Naive thymus-derived CD4-positive, alpha-beta T cell (primary cell): ENCODE measurements at regions of chr9 and their contacts with region 1.

Region 1: DNA sequence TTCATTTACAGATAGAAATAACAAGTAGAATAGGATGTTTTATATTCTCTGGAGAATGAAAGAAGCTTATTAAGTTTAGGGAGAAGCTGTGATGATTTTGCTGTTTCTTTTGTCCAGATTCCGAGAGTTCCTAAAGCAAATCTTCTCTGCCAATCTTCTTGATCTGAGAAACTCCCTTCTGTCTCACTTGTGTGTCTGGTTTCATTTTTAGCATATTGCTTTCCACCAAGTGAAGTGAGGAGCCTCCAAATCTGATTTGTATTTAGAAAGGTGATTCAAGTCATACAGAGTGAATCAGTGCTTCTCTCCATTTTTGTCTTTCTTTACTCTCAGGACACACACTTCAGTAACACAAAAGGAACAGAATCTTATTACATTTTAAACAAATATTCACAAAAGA is 48.4 kb downstream of the STX17 start:
- DNase-seq: no peak
- ATAC-seq: no peak
- H3K4me3 ChIP-seq: no peak overlapping the region
- H3K4me3 Mint-ChIP-seq: peak overlapping the region in 1 of 10 donors; percentile 6
- H3K27ac ChIP-seq: no peak overlapping the region
- H3K27ac Mint-ChIP-seq: peak overlapping the region in 4 of 9 donors; percentile 11 to 64 (median 46)
- H3K4me1 ChIP-seq: no peaks in the 10 kb centered on the region
- H3K4me1 Mint-ChIP-seq: peaks cover 5 to 32% (median 27%) of the 10 kb centered on the region in 7 donors
- H3K27me3 ChIP-seq: no peaks in the 10 kb centered on the region
- H3K27me3 Mint-ChIP-seq: no peaks in the 10 kb centered on the region

Region 2: GRCh38 chr9:99782962-99783718 is 171.7 kb before region 1 on chr9:
- CTCF ChIA-PET with region 1: no interaction called
- POLR2A ChIA-PET with region 1: no interaction called
- intact Hi-C with region 1: no loop called
- DNase-seq: no peak
- ATAC-seq: peak; percentile 48
- H3K4me3 ChIP-seq: no peak overlapping the region
- H3K4me3 Mint-ChIP-seq: no peak overlapping the region
- H3K27ac ChIP-seq: no peak overlapping the region
- H3K27ac Mint-ChIP-seq: no peak overlapping the region
- H3K4me1 ChIP-seq: no peaks in the 10 kb centered on the region
- H3K4me1 Mint-ChIP-seq: no peaks in the 10 kb centered on the region
- H3K27me3 ChIP-seq: no peaks in the 10 kb centered on the region
- H3K27me3 Mint-ChIP-seq: peaks cover 17 to 43% (median 25%) of the 10 kb centered on the region in 5 donors

Region 3: DNA sequence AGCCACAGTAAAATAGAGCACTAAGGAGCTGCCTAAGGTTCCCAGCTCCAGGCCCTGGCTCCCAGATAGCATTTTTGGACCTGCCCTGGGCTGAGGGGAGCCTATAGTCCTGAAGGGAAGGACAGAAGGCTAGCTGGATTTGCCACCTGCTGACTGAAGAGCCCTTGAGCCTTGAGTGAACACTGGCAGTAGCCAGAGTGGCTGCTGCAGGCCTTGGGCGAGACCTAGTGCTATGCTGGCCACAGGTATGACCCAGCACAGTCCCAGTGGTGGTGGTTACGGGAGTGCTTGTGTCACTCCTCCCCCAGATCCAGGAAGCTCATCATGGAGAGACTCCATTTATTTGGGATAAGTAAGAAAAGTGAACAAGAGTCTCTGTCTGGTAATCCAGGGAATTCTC is 58.7 kb before region 1 on chr9:
- CTCF ChIA-PET with region 1: no interaction called
- POLR2A ChIA-PET with region 1: no interaction called
- intact Hi-C with region 1: loop called in 1 of 2 experiments (anchors 10 kb)
- DNase-seq: no peak
- ATAC-seq: no peak
- H3K4me3 ChIP-seq: no peak overlapping the region
- H3K4me3 Mint-ChIP-seq: no peak overlapping the region
- H3K27ac ChIP-seq: no peak overlapping the region
- H3K27ac Mint-ChIP-seq: no peak overlapping the region
- H3K4me1 ChIP-seq: no peaks in the 10 kb centered on the region
- H3K4me1 Mint-ChIP-seq: no peaks in the 10 kb centered on the region
- H3K27me3 ChIP-seq: no peaks in the 10 kb centered on the region
- H3K27me3 Mint-ChIP-seq: peaks cover 0 to 65% (median 13%) of the 10 kb centered on the region in 5 donors

Region 4: GRCh38 chr9:100020121-100020795 is 65.4 kb after region 1 on chr9:
- CTCF ChIA-PET with region 1: no interaction called
- POLR2A ChIA-PET with region 1: no interaction called
- intact Hi-C with region 1: no loop called
- DNase-seq: no peak
- ATAC-seq: no peak
- H3K4me3 ChIP-seq: no peak overlapping the region
- H3K4me3 Mint-ChIP-seq: no peak overlapping the region
- H3K27ac ChIP-seq: no peak overlapping the region
- H3K27ac Mint-ChIP-seq: no peak overlapping the region
- H3K4me1 ChIP-seq: no peaks in the 10 kb centered on the region
- H3K4me1 Mint-ChIP-seq: peaks cover 0 to 9% (median 0%) of the 10 kb centered on the region in 7 donors
- H3K27me3 ChIP-seq: no peaks in the 10 kb centered on the region
- H3K27me3 Mint-ChIP-seq: no peaks in the 10 kb centered on the region